GM13977 (cell line): ENCODE measurements at regions of chr12 and their contacts with region 1.

Region 1: GRCh38 chr12:111404362-111405148 is 1.2 kb upstream of the SH2B3 start:
- DNase-seq: peak; percentile 65
- CTCF ChIP-seq: no peak

Region 2: DNA sequence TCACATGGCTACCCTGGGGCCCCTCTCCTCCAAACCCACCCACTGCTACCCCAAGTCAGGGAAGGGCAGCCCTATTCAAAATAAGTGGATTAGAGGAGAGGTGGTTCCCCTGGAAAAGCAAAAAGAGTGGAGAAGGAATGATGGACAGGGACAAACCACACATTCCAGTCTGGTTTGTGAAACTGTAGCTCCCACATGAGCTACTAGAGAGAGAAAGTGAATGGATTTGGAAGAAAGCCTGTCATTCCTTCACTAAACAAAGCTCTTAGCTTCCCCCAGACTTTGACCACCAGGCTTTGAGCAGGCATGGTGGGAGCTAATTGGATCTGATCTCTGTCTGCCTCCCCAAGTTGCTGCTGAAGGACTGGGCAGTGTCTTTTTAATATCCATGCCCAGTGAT is 529.8 kb before region 1 on chr12:
- in situ Hi-C with region 1: no loop called
- DNase-seq: no peak
- CTCF ChIP-seq: no peak

Region 3: DNA sequence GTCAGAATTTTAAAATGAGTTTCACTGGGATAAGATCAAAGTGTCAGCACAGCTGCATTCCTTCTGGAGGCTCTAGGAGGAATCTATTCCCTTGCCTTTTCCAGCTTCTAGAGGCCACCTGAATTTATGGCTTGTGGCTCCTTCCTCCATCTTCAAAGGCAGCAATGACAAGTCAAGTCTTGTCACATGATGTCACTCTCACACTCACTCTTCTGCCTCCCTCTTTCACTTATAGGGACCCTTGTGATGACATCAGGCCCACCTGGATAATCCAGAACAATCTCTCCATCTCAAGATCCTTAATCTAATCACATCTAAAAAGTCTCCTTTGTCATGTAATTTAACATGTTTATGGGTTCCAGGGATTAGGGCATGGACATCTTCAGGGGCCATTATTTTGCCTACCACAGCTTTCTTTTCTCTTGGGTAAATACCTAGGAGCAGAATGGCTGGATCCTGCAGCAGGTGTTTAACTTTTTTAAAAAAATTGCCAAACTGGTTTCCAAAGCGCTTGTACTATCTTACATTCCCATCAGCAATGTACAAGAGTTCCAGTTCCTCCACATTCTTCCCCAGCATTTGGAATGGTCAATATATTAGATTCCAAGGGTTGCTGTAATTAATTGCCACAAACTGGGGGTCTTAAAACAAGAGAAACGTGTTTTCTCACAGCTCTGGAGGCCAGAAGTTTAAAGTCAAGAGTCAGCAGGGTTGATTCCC is 456.7 kb before region 1 on chr12:
- in situ Hi-C with region 1: no loop called
- DNase-seq: no peak
- CTCF ChIP-seq: no peak

Region 4: GRCh38 chr12:111444925-111445725 is 40.6 kb after region 1 on chr12:
- in situ Hi-C with region 1: loop called (anchors 5 kb)
- DNase-seq: peak; percentile 89
- CTCF ChIP-seq: no peak